Natural killer cell (primary cell): ENCODE measurements at regions of chr14 and their contacts with region 1.

Region 1: DNA sequence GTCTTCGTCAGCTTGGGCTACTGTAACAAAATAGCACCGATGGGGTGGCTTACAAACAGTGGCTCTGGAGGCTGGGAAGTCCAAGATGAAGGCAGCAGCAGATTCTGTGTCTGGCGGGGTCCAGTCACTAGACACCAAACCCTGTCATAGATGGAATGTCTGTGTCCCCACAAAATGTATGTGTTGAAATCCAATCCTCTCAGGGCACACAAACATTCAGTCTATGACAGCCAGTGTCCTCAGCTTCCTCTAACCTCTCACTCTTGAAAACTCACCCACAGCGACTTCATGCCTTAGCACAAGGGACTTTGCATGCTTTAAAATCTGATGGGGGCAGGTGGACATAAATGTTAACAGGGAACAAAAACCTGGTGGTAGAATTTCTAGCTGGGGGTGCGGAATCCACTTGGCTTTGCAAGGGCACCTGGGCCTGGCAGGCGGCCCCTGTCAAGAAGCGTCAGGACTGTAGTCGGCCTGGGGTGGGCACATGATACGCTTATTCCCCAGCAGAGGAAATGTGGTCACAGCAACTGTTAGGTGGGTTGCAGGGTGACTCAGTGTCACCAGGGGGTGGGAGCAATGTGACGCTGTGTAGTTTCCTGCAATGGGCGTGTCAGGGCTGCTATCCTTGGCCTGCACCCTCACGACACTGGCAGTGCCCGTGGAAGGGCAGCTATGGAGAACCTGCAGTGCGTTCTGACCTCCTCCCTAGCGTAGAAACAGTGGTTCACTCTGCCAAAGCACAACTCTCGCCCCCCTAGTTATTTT is 17.7 kb downstream of the RIN3 start:
- DNase-seq: peak; percentile 86 to 91
- ATAC-seq: peak; percentile 76 to 93 (median 93)
- H3K4me3 ChIP-seq: no peak overlapping the region
- H3K4me3 Mint-ChIP-seq: peak overlapping the region; percentile 89
- H3K27ac ChIP-seq: peak overlapping the region; percentile 98
- H3K27ac Mint-ChIP-seq: peak overlapping the region; percentile 98 to 99
- H3K4me1 ChIP-seq: peaks cover 87% of the 10 kb centered on the region
- H3K4me1 Mint-ChIP-seq: peaks cover 75 to 92% of the 10 kb centered on the region in 2 donors
- H3K27me3 ChIP-seq: no peaks in the 10 kb centered on the region
- H3K27me3 Mint-ChIP-seq: no peaks in the 10 kb centered on the region
- CTCF ChIP-seq: no peak

Region 2: DNA sequence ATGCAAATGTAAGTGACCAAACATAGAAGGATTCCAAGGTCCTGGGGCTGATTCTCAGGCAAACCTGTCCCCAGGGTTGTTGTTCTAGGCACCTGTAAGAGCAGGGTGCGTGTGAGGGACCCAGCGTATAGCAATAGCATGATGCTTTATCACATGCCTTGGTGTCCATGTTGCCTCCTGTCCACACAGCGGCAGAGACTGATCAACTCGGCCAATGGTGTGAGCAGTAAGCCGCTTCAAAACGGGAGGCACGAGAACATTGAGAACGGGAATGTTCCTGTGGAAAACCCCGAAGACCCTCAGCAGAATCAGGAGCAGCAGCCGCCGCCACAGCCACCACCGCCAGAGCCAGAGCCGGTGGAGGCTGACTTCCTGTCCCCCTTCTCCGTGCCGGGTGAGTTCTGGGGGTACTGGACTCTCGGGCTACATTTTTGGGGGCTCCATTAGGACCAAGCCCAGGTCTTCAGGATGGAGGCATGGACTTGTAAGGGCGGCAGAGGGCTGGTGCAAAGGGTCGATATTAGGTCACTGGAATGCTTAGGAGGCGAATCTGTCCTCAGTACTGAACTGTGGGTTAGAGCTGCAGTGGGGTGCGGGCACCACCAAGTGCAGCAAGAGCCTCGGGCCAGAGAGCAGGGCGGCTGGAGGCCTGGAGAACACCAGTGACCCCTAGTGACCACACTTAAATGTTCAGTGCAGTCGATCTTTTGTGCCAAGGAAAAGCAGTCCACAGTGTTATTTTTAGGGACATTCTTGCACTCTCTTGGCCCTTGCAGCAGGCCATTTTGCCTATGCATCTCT is 74.9 kb before region 1 on chr14:
- intact Hi-C with region 1: no loop called
- DNase-seq: peak in 1 of 2 donors; percentile 19
- ATAC-seq: peak; percentile 14 to 45 (median 45)
- H3K4me3 ChIP-seq: no peak overlapping the region
- H3K4me3 Mint-ChIP-seq: no peak overlapping the region
- H3K27ac ChIP-seq: no peak overlapping the region
- H3K27ac Mint-ChIP-seq: no peak overlapping the region
- H3K4me1 ChIP-seq: peaks cover 24% of the 10 kb centered on the region
- H3K4me1 Mint-ChIP-seq: peaks cover 3 to 24% of the 10 kb centered on the region in 2 donors
- H3K27me3 ChIP-seq: no peaks in the 10 kb centered on the region
- H3K27me3 Mint-ChIP-seq: no peaks in the 10 kb centered on the region
- CTCF ChIP-seq: peak; percentile 27

Region 3: DNA sequence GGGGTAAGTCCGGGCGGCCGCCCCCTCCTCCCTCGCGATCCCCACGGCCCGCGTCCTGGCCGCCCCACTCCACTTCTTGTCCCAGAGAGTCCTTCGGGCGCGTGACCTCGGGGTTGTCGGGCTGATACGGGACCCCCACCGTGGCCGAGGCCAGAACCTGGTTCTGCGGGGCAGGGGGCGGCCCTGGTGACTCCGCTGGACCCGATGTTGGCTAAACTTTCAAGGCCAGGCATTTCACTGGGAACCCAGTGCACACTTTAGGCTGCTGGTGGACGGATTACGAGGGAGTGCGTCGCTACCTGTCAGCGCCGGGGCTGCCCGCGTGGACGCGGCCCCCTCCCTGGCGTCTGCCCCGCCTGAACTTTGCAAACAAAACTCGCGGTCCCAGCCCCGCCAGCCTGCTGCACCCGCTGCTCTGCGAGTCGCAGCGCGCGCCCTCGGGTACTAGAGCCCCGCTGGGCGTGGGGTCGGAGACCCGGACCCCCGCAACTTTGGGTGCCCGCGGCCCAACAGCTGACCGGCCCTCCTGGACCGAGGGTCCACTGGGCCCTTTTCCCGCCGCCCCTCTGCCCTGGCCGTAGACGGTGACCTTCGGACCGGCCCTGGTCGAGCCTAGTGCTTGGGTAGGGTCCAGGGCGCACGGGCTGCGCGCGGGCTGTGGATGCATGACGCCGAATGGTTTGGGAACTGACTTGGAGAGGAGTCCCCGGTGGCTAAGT is 17.2 kb before region 1 on chr14:
- intact Hi-C with region 1: loop called (anchors 1 kb)
- DNase-seq: peak; percentile 44 to 66
- ATAC-seq: peak; percentile 33 to 57 (median 37)
- H3K4me3 ChIP-seq: peak overlapping the region; percentile 92
- H3K4me3 Mint-ChIP-seq: peak overlapping the region; percentile 90
- H3K27ac ChIP-seq: peak overlapping the region; percentile 90
- H3K27ac Mint-ChIP-seq: peak overlapping the region; percentile 97 to 98
- H3K4me1 ChIP-seq: peaks cover 59% of the 10 kb centered on the region
- H3K4me1 Mint-ChIP-seq: peaks cover 49 to 63% of the 10 kb centered on the region in 2 donors
- H3K27me3 ChIP-seq: no peaks in the 10 kb centered on the region
- H3K27me3 Mint-ChIP-seq: no peaks in the 10 kb centered on the region
- CTCF ChIP-seq: no peak

Region 4: DNA sequence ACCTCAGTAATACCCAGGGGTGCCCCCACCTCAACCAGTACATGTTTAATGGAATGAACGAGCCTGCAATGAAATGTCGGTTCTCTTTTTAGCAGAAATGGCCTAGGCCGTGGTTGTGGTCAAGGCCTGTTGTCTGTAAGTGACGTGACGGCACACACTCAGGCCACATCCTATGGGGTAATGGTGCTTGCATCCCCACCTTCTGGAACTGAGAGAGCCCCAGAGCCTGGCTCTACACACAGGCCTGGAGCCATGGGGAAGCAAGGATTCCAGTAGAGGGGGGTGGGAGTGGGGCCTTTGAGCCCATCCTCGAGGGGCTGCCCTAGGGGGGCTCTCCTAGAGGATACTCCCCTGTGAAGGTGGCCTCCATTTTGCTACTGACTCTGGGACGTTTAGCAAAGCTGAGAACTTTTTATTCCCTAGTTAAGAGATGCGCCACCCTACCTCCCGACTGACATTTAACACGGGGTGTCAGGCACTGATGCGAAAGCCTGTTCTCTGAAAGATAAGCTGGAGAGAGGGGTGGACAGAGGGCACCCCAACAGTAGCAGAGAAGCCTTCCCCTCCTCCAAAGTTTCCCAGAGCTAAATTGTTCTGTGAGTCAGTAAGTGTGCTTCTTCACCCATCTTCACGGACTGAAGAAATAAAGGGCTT is 11.1 kb before region 1 on chr14:
- intact Hi-C with region 1: loop called (anchors 1 kb)
- DNase-seq: peak; percentile 44 to 56
- ATAC-seq: peak; percentile 69 to 89 (median 88)
- H3K4me3 ChIP-seq: no peak overlapping the region
- H3K4me3 Mint-ChIP-seq: peak overlapping the region; percentile 85
- H3K27ac ChIP-seq: peak overlapping the region; percentile 90
- H3K27ac Mint-ChIP-seq: peak overlapping the region; percentile 97 to 98
- H3K4me1 ChIP-seq: peaks cover 96% of the 10 kb centered on the region
- H3K4me1 Mint-ChIP-seq: peaks cover 82 to 98% of the 10 kb centered on the region in 2 donors
- H3K27me3 ChIP-seq: no peaks in the 10 kb centered on the region
- H3K27me3 Mint-ChIP-seq: no peaks in the 10 kb centered on the region
- CTCF ChIP-seq: no peak

Region 5: GRCh38 chr14:92568621-92569479 is 37.6 kb after region 1 on chr14:
- intact Hi-C with region 1: loop called (anchors 1 kb)
- DNase-seq: peak; percentile 69 to 82
- ATAC-seq: peak; percentile 83 to 94 (median 88)
- H3K4me3 ChIP-seq: no peak overlapping the region
- H3K4me3 Mint-ChIP-seq: peak overlapping the region; percentile 83
- H3K27ac ChIP-seq: peak overlapping the region; percentile 89
- H3K27ac Mint-ChIP-seq: peak overlapping the region; percentile 98
- H3K4me1 ChIP-seq: peaks cover 82% of the 10 kb centered on the region
- H3K4me1 Mint-ChIP-seq: peaks cover 65 to 76% of the 10 kb centered on the region in 2 donors
- H3K27me3 ChIP-seq: no peaks in the 10 kb centered on the region
- H3K27me3 Mint-ChIP-seq: no peaks in the 10 kb centered on the region
- CTCF ChIP-seq: no peak